SK-N-SH (cell line): ENCODE measurements at regions of chr17 and their contacts with region 1.

Region 1: DNA sequence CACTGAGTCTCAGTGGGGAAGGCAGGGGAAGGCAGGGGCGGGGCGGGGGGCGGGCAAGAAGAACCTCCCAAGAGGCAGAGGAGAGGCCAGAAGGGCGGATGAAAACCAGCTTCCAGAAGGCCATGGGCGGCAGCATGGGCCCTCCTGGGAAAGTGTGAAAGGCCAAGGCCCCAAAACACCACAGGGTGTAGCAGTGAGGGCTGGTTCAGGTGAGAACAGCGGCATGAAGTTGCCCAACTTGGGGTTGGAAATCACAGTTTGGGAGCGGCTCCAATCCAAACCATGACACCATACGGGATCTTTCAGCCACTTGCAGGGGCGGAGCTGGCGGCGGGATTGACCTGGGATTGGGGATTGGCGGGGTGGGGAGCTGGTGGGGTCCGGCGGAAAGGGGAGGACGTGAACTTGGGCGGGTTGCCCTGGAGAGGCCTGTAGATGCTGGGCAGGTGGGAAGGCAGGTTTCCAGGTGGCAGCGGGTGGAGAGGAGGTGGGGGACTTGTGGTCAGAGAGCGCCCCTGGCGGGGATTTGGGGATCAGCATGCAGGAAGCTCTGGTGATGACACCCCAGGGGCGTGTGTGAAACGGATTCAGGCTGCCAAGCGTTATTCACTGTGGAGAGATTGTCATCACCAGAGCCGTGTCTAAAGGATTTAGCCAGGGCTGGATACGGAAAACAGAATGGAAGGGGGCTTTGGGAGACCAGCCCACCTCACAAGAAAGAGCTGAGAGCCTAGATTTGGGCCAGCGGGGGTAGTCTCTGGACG is 80.9 kb downstream of the ARHGAP23 start:
- DNase-seq: peak; percentile 98
- H3K4me3 ChIP-seq: peak overlapping the region; percentile 17 to 50; a peak in 2 of 4 replicates
- H3K27ac ChIP-seq: no peak overlapping the region
- H3K4me1 ChIP-seq: peaks cover 13 to 14% of the 10 kb centered on the region in 2 experiments; a peak in 2 of 4 replicates
- H3K27me3 ChIP-seq: no peaks in the 10 kb centered on the region
- CTCF ChIP-seq: peak; percentile 83
- EP300 ChIP-seq: no peak
- RAD21 ChIP-seq: peak; percentile 70

Region 2: GRCh38 chr17:38444151-38444550 is 65.0 kb before region 1 on chr17:
- CTCF ChIA-PET with region 1: interaction called, 10 read pairs
- POLR2A ChIA-PET with region 1: no interaction called
- DNase-seq: peak; percentile 91
- H3K4me3 ChIP-seq: no peak overlapping the region; a peak in 1 of 4 replicates
- H3K27ac ChIP-seq: no peak overlapping the region
- H3K4me1 ChIP-seq: peaks cover 10 to 17% of the 10 kb centered on the region in 2 experiments; a peak in 2 of 4 replicates
- H3K27me3 ChIP-seq: no peaks in the 10 kb centered on the region
- CTCF ChIP-seq: peak; percentile 94
- EP300 ChIP-seq: no peak
- RAD21 ChIP-seq: peak; percentile 97

Region 3: GRCh38 chr17:38498186-38498752 is 10.9 kb before region 1 on chr17:
- CTCF ChIA-PET with region 1: interaction called, 29 read pairs
- POLR2A ChIA-PET with region 1: no interaction called
- DNase-seq: no peak
- H3K4me3 ChIP-seq: no peak overlapping the region
- H3K27ac ChIP-seq: no peak overlapping the region
- H3K4me1 ChIP-seq: no peaks in the 10 kb centered on the region
- H3K27me3 ChIP-seq: no peaks in the 10 kb centered on the region
- CTCF ChIP-seq: no peak
- EP300 ChIP-seq: no peak
- RAD21 ChIP-seq: no peak

Region 4: DNA sequence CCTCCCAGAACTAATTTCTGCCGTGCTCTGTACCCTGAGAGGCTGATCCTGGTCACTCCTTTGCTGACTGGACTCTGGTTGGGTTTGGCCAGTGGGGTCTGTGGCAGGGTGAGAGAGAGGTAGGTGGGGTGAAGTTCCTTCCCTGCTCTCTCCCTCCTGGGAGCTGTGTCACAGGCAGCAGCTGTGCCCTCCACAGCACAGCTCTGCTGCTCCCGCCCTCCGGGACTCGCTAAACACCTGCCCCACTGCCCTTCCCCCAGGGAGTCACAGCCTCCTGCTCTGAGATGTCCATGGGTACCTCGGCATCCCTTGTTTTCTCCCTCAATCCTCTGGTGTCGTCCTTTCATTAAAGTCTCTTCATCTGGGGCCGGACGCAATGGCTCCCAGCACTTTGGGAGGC is 30.2 kb after region 1 on chr17:
- CTCF ChIA-PET with region 1: interaction called, 32 read pairs
- POLR2A ChIA-PET with region 1: interaction called, 3 read pairs
- DNase-seq: no peak
- H3K4me3 ChIP-seq: no peak overlapping the region
- H3K27ac ChIP-seq: no peak overlapping the region
- H3K4me1 ChIP-seq: no peaks in the 10 kb centered on the region
- H3K27me3 ChIP-seq: no peaks in the 10 kb centered on the region
- CTCF ChIP-seq: no peak
- EP300 ChIP-seq: no peak
- RAD21 ChIP-seq: no peak

Region 5: GRCh38 chr17:38550661-38551060 is 41.5 kb after region 1 on chr17:
- CTCF ChIA-PET with region 1: interaction called, 21 read pairs
- POLR2A ChIA-PET with region 1: no interaction called
- DNase-seq: no peak
- H3K4me3 ChIP-seq: no peak overlapping the region
- H3K27ac ChIP-seq: no peak overlapping the region
- H3K4me1 ChIP-seq: peaks cover 0 to 15% of the 10 kb centered on the region in 2 experiments; a peak in 2 of 4 replicates
- H3K27me3 ChIP-seq: no peaks in the 10 kb centered on the region
- CTCF ChIP-seq: no peak
- EP300 ChIP-seq: no peak
- RAD21 ChIP-seq: no peak

Region 6: DNA sequence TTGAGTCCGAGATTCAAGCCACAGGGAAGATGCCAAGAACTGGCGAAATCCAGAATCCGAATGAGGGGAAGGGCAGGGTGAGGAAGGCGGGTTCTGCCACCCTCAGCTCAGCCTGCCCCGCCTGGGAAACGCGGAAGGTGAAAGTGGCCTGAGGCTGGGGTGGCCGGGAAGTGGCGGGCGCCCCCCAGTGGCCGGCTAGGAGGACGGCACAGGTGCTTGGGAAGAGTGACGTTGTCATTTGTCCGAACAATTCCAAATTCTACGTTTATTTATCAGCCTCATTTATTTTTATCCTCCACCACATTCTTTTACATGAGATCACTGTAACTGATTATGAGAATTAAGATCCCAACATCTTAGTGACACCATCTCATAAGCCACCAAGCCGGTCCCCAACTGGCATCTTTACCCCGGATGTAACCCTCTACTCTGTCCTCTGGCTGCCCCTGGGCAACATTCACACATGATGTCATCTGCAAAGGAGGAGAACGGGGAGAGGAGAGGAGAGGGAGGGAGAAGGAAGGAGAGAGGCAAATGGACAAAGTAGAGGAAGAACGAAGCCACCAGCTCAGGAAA is 75.2 kb after region 1 on chr17:
- CTCF ChIA-PET with region 1: interaction called, 46 read pairs
- POLR2A ChIA-PET with region 1: no interaction called
- DNase-seq: peak; percentile 86
- H3K4me3 ChIP-seq: peak overlapping the region in 1 of 2 experiments; percentile 21; a peak in 1 of 4 replicates
- H3K27ac ChIP-seq: no peak overlapping the region
- H3K4me1 ChIP-seq: peaks cover 5 to 45% of the 10 kb centered on the region in 2 experiments; a peak in 3 of 4 replicates
- H3K27me3 ChIP-seq: no peaks in the 10 kb centered on the region; the same call in none of the 2 replicates
- CTCF ChIP-seq: peak; percentile 97
- EP300 ChIP-seq: no peak
- RAD21 ChIP-seq: peak; percentile 81

Region 7: GRCh38 chr17:38605888-38606645 is 96.9 kb after region 1 on chr17 and contains the start of gene SRCIN1:
- CTCF ChIA-PET with region 1: interaction called, 14 read pairs
- POLR2A ChIA-PET with region 1: no interaction called
- DNase-seq: peak; percentile 92
- H3K4me3 ChIP-seq: peak within 1 kb of the TSS; percentile 60 to 63
- H3K27ac ChIP-seq: peak within 1 kb of the TSS in 1 of 2 experiments; percentile 83; a peak in 2 of 4 replicates
- H3K4me1 ChIP-seq: peaks cover 0 to 58% of the 10 kb centered on the region in 2 experiments; a peak in 1 of 4 replicates
- H3K27me3 ChIP-seq: no peaks in the 10 kb centered on the region; the same call in 1 of the 2 replicates
- CTCF ChIP-seq: peak; percentile 90
- EP300 ChIP-seq: no peak
- RAD21 ChIP-seq: peak; percentile 50
- polyA plus RNA-seq, gene SRCIN1: 0.45 and 1.0 TPM in 2 replicates